Sciatic nerve (tissue), 2 donors: ENCODE measurements at regions of chr11 and their contacts with region 1.

Region 1: DNA sequence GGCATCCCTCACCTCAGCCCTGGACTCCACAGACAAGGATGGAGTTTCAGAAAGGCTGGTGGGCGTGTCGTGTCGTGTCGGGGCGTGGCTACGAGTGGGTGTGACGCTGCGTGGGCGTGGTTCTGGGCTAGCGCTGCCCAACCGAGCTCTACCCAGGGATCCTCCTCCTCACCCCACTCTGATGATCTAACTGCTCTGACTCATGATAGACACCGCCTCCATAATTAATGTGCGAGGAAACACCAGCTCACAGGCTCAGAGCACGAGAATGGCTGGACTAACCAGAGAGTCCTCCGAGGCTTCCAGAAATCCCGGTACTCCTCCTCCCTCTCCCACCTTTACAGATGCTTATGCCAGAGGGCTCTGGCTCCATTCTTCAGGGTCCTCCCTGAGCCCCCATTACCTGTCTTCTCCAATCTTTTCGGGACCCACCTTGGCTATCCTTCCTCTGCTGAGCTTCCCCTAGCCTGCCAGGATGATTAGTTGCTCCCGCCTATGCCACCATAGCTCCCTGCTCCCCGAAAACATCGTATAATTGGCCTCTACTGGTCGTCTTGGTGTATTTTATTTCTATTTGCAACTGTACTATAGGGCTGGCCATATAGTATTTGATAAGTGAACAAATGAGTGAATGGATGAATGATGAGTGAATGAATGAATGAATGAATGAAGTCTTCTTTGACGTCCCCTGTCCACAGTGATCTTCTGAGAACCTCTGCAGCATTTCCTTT is 21.8 kb downstream of the TMPRSS13 start:
- DNase-seq: peak; percentile 89
- ATAC-seq: peak; percentile 97

Region 2: DNA sequence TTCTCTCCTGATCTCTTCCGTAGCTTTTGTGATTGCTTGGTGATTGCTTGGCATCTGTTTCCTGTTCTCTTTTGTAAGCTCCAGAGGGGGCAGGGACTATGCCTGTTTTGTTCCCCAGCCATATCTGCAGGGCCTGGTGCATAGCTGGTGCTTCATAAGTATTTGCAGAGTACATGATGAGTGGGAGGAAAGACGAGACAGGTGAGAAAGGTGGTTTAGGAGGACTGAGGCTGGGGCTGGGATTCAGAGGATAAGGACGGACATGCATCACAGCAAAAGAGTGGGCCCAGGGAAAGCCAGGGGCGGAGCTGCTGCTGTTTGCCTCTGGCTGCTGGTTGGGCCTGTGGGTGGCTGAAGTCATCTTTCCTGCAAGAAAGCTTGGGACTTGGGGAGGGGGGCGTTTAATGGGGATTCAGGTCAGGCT is 172.8 kb before region 1 on chr11:
- intact Hi-C with region 1: no loop called
- DNase-seq: no peak
- ATAC-seq: no peak

Region 3: DNA sequence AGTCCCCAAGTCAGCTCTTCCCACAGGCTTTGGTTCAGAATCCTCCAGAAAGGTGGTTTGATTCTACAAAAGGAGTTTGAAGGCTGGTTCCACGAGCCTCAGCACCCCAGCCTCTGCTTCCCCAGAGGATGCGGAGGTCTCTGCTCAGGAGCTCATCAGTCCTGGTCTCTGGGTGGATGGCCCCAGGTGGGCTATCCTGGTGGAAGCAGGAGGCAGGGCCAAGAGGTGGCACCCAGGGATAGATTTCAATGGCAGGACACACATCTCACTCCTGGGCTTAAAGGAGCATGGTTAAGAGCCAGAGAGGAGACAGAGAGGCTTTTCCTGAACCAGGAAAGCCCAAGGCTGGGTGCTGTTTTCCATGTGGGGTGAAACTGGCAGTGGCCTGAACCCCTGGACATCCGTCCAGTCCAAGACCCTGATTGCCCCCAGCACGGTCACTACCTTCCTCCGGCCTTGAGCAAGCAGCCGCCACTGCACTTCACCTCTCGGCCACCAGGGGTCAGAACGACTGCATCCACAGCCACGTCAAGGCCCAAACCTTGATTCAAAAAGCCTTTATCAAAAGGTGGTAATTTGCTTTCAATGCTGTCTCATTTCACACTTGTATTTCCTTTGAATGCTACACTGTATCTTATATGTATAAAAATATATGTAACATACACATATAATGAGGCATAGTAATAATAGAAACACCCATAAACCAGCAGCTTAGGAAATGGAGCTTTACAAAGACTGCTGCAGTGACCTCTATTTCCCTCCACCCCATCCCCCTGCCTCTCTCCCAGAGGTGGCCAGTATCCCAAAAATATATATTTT is 63.5 kb before region 1 on chr11:
- intact Hi-C with region 1: loop called (anchors 10 kb)
- DNase-seq: peak; percentile 92
- ATAC-seq: peak; percentile 80

Region 4: DNA sequence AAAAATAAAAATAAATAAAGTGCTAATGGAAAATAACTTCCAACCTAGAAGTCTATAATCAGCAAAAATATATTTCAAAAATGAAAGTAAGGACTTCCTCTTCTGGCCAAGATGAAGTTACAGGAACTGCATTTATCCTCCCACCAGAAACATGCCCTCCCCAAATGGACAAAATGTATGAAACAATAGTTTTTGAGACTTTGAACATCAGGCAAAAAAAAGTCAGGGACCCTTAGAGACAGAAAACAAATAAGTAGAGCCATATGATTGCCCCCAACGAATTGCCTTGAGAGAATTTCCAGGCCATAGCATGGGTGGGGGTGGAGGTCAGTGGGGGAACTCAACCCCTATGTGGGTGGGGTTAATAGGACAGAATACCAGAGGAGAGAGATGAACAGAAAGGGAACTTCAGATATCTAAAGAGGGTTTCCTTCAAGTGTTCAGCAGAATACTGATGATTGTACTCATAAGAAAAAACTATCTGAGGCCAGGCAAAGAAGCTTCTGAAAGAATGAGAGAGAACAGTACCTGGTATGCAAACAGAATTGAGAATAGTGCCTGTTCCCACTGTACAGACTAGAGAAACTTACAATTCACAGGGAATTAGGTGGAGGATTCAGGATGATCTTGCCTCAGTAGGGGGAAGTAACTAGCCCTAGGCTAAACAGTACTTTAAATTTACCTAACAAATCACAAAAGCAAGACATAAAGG is 52.2 kb after region 1 on chr11:
- intact Hi-C with region 1: loop called (anchors 1 kb)
- DNase-seq: no peak
- ATAC-seq: peak; percentile 30

Region 5: GRCh38 chr11:118139578-118139977 is 232.2 kb after region 1 on chr11:
- intact Hi-C with region 1: no loop called
- DNase-seq: no peak
- ATAC-seq: no peak